Dorsolateral prefrontal cortex (tissue), 120 donors: ENCODE measurements at regions of chr3 and their contacts with region 1.

Region 1: DNA sequence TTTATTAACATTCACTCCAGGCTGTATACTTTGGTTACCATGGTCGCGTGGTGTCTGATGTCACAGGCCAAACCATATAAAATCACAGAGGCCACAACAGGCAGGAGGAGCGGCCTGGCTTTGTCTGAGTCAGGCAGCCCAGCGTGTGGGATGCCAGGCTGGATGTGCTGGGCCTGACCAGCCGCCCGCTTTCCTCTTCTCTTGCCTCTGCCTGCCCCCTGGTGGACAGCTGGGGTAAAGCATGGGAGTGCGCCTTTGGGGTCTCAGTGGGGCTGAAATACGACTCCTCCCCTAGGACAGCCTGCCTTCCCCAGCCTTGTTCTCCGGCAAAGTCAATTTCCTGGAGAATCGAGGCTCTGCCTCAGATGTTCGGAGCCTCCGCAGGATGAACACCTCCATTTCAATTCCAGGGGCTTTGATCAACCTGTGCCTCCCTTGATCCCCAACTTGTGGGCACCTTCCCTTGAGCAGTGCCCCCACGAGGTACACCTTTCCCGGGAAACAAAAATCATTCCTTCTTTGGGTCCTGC is 78.2 kb downstream of the CCNL1 start:
- DNase-seq: peak; percentile 90 to 93 (median 92)
- H3K4me3 ChIP-seq: peak overlapping the region in 12 of 59 donors; percentile 7 to 31 (median 16)
- H3K27ac ChIP-seq: peak overlapping the region; percentile 9 to 96 (median 86)
- H3K27me3 ChIP-seq: no peaks in the 10 kb centered on the region
- CTCF ChIP-seq: peak; percentile 89 to 100 (median 98)

Region 2: GRCh38 chr3:156826144-156826895 is 255.4 kb before region 1 on chr3 and contains the start of gene LEKR1:
- intact Hi-C with region 1: loop called in 1 of 2 experiments (anchors 5 kb)
- DNase-seq: peak; percentile 55 to 88 (median 80)
- H3K4me3 ChIP-seq: peak within 1 kb of the TSS; percentile 55 to 93 (median 78)
- H3K27ac ChIP-seq: peak within 1 kb of the TSS; percentile 30 to 94 (median 83)
- H3K27me3 ChIP-seq: no peaks in the 10 kb centered on the region
- CTCF ChIP-seq: peak in 19 of 56 donors; percentile 6 to 34 (median 16)
- total RNA-seq, gene LEKR1: 0.25 to 7.8 (median 1.3) TPM in 114 of 120 experiments, not detected in the others

Region 3: DNA sequence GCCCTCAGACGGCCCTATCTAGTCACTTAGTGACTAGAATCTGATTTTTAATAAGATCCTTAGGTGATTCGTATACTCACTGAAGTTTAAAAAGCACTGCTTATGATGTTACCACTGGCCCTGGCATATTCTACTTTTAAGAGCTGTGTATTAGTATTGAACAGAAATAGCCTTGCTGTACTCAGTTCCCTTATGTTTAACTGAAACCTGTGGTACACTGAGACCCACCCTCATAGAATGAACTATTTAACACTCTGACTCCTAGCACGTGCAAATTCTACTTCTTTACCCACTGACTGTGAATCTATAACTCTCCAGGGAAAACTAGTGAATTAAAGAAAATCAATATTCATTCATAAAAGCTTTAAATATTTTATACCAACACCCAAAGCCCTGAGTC is 30.7 kb before region 1 on chr3:
- intact Hi-C with region 1: no loop called
- DNase-seq: no peak
- H3K4me3 ChIP-seq: no peak overlapping the region
- H3K27ac ChIP-seq: no peak overlapping the region
- H3K27me3 ChIP-seq: no peaks in the 10 kb centered on the region
- CTCF ChIP-seq: no peak

Region 4: DNA sequence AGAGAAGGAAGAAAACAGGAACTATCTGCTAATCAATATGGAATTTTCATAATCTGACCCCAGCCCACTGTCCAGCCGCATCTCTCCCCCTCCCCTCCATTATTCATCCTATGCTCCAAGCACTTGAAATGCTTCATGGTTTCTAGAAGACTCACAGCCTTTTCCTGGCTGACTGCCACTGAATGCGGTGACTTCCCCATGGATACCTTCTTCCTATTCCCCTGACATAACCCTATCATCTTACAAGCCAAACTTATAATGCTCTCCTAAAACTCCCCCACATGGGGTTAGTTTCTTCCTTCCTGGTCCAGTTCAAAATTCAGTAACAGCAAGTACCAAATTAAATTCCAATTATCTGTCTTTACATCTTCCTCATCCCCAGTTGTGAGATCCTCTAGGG is 323.7 kb after region 1 on chr3:
- intact Hi-C with region 1: no loop called
- DNase-seq: no peak
- H3K4me3 ChIP-seq: no peak overlapping the region
- H3K27ac ChIP-seq: no peak overlapping the region
- H3K27me3 ChIP-seq: no peaks in the 10 kb centered on the region
- CTCF ChIP-seq: no peak